GM12878 (cell line): ENCODE measurements at regions of chr13 and their contacts with region 1.

Region 1: GRCh38 chr13:81540777-81541176 is 1199.9 kb upstream of the SPRY2 start:
- DNase-seq: no peak
- ATAC-seq: peak; percentile 54
- H3K4me3 ChIP-seq: no peak overlapping the region
- H3K27ac ChIP-seq: no peak overlapping the region
- H3K4me1 ChIP-seq: no peaks in the 10 kb centered on the region
- H3K27me3 ChIP-seq: no peaks in the 10 kb centered on the region
- CTCF ChIP-seq: peak in 1 of 3 experiments; percentile 31; a peak in 2 of 6 replicates
- EP300 ChIP-seq: no peak
- POLR2A ChIP-seq: no peak
- RAD21 ChIP-seq: no peak

Region 2: GRCh38 chr13:81487151-81487550 is 53.6 kb before region 1 on chr13:
- CTCF ChIA-PET with region 1: interaction called, 12 read pairs
- POLR2A ChIA-PET with region 1: no interaction called
- RAD21 ChIA-PET with region 1: interaction called, 4 read pairs
- SMC1A ChIA-PET with region 1: interaction called, 3 read pairs
- in situ Hi-C with region 1: no loop called
- intact Hi-C with region 1: no loop called
- DNase-seq: no peak
- ATAC-seq: peak; percentile 60
- H3K4me3 ChIP-seq: no peak overlapping the region
- H3K27ac ChIP-seq: no peak overlapping the region
- H3K4me1 ChIP-seq: no peaks in the 10 kb centered on the region
- H3K27me3 ChIP-seq: no peaks in the 10 kb centered on the region
- CTCF ChIP-seq: peak; percentile 6 to 39 (median 39); a peak in 2 of 6 replicates
- EP300 ChIP-seq: no peak
- POLR2A ChIP-seq: no peak
- RAD21 ChIP-seq: no peak

Region 3: GRCh38 chr13:81610644-81611043 is 69.9 kb after region 1 on chr13:
- CTCF ChIA-PET with region 1: no interaction called
- POLR2A ChIA-PET with region 1: no interaction called
- RAD21 ChIA-PET with region 1: no interaction called
- SMC1A ChIA-PET with region 1: no interaction called
- in situ Hi-C with region 1: no loop called
- intact Hi-C with region 1: no loop called
- DNase-seq: no peak
- ATAC-seq: no peak
- H3K4me3 ChIP-seq: no peak overlapping the region
- H3K27ac ChIP-seq: no peak overlapping the region
- H3K4me1 ChIP-seq: no peaks in the 10 kb centered on the region
- H3K27me3 ChIP-seq: no peaks in the 10 kb centered on the region
- CTCF ChIP-seq: no peak
- EP300 ChIP-seq: no peak
- POLR2A ChIP-seq: no peak
- RAD21 ChIP-seq: no peak

Region 4: DNA sequence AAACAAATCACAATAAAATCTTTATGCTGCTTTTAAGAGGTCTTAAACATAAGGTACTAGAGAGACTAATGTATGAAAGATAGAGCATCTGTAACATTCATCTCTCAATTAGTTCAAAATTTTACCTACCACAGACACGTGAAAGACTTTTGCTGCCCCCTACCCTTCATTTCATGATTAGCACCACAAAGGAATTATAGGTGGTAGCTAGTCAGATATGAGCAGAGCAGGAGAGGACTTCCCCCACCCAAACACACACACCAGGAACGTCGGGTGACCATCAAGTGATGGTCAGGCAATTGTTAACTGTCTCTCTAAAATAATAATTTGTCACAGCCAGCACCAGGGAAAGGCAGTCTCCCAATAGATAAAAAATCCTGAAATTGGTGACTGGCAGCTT is 331.8 kb after region 1 on chr13:
- CTCF ChIA-PET with region 1: interaction called, 11 read pairs
- POLR2A ChIA-PET with region 1: no interaction called
- RAD21 ChIA-PET with region 1: interaction called, 4 read pairs
- SMC1A ChIA-PET with region 1: no interaction called
- in situ Hi-C with region 1: no loop called
- intact Hi-C with region 1: loop called (anchors 10 kb)
- DNase-seq: no peak
- ATAC-seq: peak; percentile 85
- H3K4me3 ChIP-seq: no peak overlapping the region
- H3K27ac ChIP-seq: no peak overlapping the region
- H3K4me1 ChIP-seq: no peaks in the 10 kb centered on the region
- H3K27me3 ChIP-seq: no peaks in the 10 kb centered on the region
- CTCF ChIP-seq: peak in 2 of 3 experiments; percentile 29 to 48; a peak in 4 of 6 replicates
- EP300 ChIP-seq: no peak
- POLR2A ChIP-seq: no peak
- RAD21 ChIP-seq: peak; percentile 25; the same call in 1 of the 2 replicates

Region 5: DNA sequence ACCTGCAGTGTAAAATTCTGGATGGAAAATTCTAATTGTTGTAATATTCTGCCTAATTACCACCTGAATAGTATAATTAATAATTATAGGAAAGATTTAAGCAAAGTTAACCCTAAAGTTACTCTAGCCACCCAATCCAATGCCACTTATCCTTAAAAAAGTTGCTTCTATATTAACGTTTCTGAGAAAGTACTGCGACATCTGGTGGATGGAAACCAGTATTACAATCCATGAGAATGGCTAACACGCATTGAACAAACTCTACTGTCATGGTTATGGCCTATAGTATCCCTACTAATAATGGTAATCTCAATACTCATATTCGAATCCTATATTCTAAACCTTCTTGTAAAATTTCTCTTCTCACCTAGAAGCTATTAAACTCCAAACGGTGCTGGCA is 789.7 kb after region 1 on chr13:
- CTCF ChIA-PET with region 1: interaction called, 7 read pairs
- POLR2A ChIA-PET with region 1: no interaction called
- RAD21 ChIA-PET with region 1: no interaction called
- SMC1A ChIA-PET with region 1: no interaction called
- in situ Hi-C with region 1: loop called (anchors 25 kb)
- intact Hi-C with region 1: loop called (anchors 5 kb)
- DNase-seq: no peak
- ATAC-seq: peak; percentile 77
- H3K4me3 ChIP-seq: no peak overlapping the region
- H3K27ac ChIP-seq: no peak overlapping the region
- H3K4me1 ChIP-seq: no peaks in the 10 kb centered on the region
- H3K27me3 ChIP-seq: no peaks in the 10 kb centered on the region
- CTCF ChIP-seq: peak; percentile 48 to 58 (median 52)
- EP300 ChIP-seq: no peak
- POLR2A ChIP-seq: no peak
- RAD21 ChIP-seq: peak; percentile 32; the same call in 1 of the 2 replicates